Heart right ventricle (tissue), 16 donors: ENCODE measurements at regions of chr11 and their contacts with region 1.

Region 1: GRCh38 chr11:88139865-88140264 is 35.4 kb downstream of the RAB38 start:
- DNase-seq: no peak
- ATAC-seq: no peak
- H3K4me3 ChIP-seq: no peak overlapping the region
- H3K27ac ChIP-seq: no peak overlapping the region
- H3K4me1 ChIP-seq: no peaks in the 10 kb centered on the region
- H3K27me3 ChIP-seq: no peaks in the 10 kb centered on the region
- CTCF ChIP-seq: no peak

Region 2: GRCh38 chr11:88175569-88176075 is 35.8 kb after region 1 on chr11:
- intact Hi-C with region 1: no loop called
- DNase-seq: no peak
- ATAC-seq: peak in 3 of 8 donors; percentile 31 to 35 (median 32)
- H3K4me3 ChIP-seq: peak overlapping the region in 9 of 10 donors; percentile 29 to 56 (median 52)
- H3K27ac ChIP-seq: no peak overlapping the region
- H3K4me1 ChIP-seq: peaks cover 0 to 20% (median 9%) of the 10 kb centered on the region in 9 donors
- H3K27me3 ChIP-seq: peaks cover 0 to 10% (median 0%) of the 10 kb centered on the region in 7 donors
- CTCF ChIP-seq: no peak

Region 3: DNA sequence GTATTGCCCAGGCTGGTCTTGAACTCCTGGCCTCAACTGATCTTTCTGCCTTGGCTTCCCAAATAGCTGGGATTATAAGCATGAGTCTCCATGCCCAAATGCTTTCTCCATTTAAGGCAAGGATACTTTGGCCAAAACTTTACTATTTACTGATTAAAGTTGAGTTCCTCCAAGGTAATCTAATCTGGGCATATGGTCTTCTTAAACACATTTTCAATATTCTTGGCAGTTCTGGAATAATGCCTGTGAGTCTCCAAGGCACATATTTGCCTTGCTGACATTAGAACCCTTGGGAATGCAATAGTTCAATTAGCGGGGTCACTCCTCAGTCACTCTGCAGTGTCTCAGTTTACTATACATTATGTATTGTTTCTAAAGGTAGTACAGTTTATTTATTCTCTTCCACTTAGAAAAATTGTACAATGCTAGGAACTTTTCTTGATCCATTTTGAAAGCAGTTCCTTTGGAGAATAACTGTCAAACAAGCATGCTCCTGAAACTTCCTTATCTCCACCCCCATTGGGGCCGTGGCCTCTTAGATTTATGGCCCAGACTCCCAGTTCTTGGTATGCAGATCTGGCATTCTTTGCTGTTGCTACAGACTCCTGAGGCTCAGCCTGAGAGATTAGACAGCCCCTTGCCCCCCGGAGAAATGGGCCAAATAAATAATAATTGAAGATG is 48.5 kb after region 1 on chr11:
- intact Hi-C with region 1: loop called in 1 of 10 experiments (anchors 5 kb)
- DNase-seq: no peak
- ATAC-seq: peak in 1 of 8 donors; percentile 34
- H3K4me3 ChIP-seq: no peak overlapping the region
- H3K27ac ChIP-seq: no peak overlapping the region
- H3K4me1 ChIP-seq: no peaks in the 10 kb centered on the region
- H3K27me3 ChIP-seq: no peaks in the 10 kb centered on the region
- CTCF ChIP-seq: no peak